ENCODE measurements at regions of chr5 and their contacts with region 1.

Region 1: DNA sequence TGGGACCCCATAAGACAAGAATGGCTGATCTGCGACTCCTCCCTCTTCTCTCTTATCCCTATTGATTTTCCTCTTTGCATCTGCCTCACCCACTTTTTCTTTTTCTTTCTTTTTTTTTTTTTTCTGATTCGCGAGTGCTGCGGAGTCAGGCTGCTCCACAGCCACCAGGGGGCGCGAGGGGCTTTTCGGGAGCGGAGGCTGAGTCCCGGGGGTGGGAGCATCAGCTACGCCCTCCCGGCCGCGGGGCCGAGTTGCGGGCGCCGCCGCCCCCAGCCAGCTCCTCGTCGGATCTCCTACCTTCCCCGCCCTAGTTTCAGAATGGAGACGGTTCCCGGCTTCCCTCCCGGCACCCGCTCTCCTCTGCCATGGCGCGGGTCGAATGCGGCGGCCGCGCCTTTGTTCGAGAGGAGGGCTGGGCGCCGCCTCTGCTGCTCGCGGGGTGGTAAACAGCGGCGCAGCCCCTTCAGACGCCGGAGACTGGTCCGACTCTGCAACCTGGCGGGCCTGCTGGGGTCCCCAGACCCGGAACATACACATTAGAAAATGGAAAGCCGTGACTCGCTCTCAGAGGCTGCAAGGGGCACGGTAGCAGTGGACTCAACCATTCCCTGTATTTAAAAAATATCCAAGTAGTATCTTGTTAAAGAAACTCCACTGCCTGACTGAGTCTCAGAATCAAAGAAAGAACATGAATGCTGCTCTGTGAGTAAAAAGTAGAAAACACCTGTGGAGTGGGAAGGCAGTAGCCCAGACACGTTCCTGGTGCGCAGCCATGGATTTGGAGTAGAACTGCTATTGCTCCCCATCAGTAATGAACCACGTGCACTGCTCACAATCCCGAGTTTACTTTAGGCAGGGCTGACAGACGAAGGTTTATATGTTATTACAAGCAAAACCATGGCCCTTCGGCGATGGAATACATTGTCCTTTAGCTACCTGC is 55.7 kb downstream of the DPYSL3 start:
- DNase-seq: peak; percentile 70 to 96 (median 86)

Region 2: DNA sequence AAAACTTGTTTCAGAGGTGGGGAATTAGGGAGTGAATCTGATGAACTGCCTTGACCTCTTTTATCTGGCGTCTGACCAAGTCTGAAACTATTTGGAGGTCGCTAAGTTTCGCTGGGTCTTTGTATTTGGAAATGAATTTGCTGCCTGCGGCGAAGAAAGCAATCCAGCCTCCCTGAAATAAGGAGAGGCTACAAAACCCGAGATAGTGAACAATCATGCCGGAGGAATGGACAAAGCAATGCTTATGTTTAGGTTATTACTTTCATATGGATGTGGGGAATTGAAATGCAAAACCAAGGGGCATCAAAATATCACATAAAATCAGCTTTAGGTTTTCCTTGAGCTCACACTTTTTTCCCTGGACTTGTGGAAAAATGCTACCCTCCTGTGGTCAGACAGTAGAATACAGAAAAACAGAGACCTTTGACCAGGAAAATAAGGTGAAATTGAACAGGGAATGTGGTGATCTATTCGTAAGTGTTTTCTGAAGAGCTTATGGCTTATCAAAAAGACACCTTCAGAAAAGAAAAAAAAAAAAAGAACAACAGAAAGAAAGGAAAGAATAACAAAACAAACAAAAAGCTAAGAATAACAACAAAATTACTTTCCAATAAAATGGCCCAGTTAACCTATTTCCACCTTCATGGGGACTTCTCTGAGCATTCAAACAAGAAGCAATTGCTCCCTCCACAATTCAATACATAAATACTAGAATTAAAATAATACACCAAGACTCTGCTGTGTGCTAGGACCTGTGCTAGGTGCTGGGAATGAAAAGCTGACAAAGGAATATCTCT is 124.3 kb after region 1 on chr5:
- intact Hi-C with region 1: loop called (anchors 1 kb)
- DNase-seq: no peak

Region 3: GRCh38 chr5:147822686-147823491 is 368.7 kb after region 1 on chr5:
- intact Hi-C with region 1: loop called (anchors 10 kb)
- DNase-seq: peak; percentile 28 to 92 (median 50)

Measured in posterior cingulate gyrus (tissue), 11 donors.